Ascending aorta (tissue), 2 donors: ENCODE measurements at regions of chr5 and their contacts with region 1.

Region 1: GRCh38 chr5:159786901-159787691 is 129.2 kb upstream of the ADRA1B start:
- DNase-seq: peak; percentile 53 to 90
- H3K4me3 ChIP-seq: no peak overlapping the region
- H3K27ac ChIP-seq: peak overlapping the region; percentile 94 to 95
- H3K4me1 ChIP-seq: peaks cover 9 to 59% of the 10 kb centered on the region in 2 donors
- H3K27me3 ChIP-seq: no peaks in the 10 kb centered on the region
- CTCF ChIP-seq: no peak

Region 2: GRCh38 chr5:159451197-159452052 is 335.7 kb before region 1 on chr5:
- intact Hi-C with region 1: loop called (anchors 5 kb)
- DNase-seq: peak; percentile 16 to 83
- H3K4me3 ChIP-seq: no peak overlapping the region
- H3K27ac ChIP-seq: peak overlapping the region; percentile 72 to 79
- H3K4me1 ChIP-seq: peaks cover 0 to 15% of the 10 kb centered on the region in 2 donors
- H3K27me3 ChIP-seq: no peaks in the 10 kb centered on the region
- CTCF ChIP-seq: no peak

Region 3: DNA sequence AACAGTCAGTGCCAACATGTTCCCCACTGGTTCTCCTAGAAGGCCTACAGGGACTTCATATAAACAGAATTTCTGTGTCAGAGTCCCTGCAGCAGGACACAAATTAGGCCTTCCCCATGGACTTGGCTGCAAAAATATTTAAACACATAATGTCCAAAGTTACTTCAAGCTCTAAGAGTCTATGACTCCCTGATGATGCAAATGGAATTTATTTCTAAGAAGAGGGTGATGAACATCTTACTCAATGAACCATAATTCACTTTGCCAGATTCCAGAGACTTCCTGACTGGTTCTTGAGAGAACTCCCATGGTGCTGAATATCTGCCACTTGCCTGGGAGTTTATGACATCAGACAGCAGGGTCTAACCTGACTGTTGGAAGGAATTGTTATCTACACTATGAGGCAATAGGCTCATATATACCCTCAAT is 96.4 kb after region 1 on chr5:
- intact Hi-C with region 1: loop called (anchors 2 kb)
- DNase-seq: peak in 1 of 2 donors; percentile 81
- H3K4me3 ChIP-seq: no peak overlapping the region
- H3K27ac ChIP-seq: peak overlapping the region; percentile 89 to 92
- H3K4me1 ChIP-seq: peaks cover 11 to 32% of the 10 kb centered on the region in 2 donors
- H3K27me3 ChIP-seq: no peaks in the 10 kb centered on the region
- CTCF ChIP-seq: no peak

Region 4: DNA sequence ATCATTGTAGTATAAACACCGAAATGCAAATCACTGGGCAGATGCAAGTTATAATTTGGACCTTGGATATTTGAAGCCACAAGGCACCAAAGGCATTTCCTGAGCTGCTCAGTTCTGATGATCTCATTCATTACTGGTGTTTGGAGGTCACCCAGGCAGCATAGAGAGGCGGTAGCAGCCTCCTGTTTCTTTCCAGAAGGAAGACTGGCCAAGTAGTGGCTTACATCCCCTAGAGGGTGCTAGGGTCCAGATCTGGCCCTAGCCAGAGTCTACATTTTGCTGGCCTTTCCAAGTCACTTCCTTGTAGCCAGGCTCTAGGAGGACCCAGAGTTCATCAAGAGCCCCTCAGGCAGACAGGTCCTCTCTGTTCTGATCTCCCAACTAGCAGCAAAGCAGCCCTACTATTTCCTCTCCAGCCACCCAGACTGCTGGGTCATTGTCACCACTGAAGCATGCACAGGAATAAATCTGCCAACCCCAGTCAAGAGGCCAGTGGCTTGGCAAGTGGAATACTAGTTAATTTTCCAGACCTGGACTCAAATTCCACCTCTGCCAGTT is 188.4 kb after region 1 on chr5:
- intact Hi-C with region 1: loop called (anchors 10 kb)
- DNase-seq: peak in 1 of 2 donors; percentile 82
- H3K4me3 ChIP-seq: no peak overlapping the region
- H3K27ac ChIP-seq: peak overlapping the region; percentile 80 to 90
- H3K4me1 ChIP-seq: peaks cover 18 to 20% of the 10 kb centered on the region in 2 donors
- H3K27me3 ChIP-seq: no peaks in the 10 kb centered on the region
- CTCF ChIP-seq: peak in 2 of 3 experiments; percentile 28 to 53